ENCODE measurements at regions of chr4 and their contacts with region 1.

Region 1: GRCh38 chr4:149708513-149709175 is 107.0 kb downstream of the IQCM start:
- DNase-seq: peak; percentile 85
- ATAC-seq: peak; percentile 89
- H3K4me3 ChIP-seq: no peak overlapping the region
- H3K27ac ChIP-seq: peak overlapping the region; percentile 78
- H3K4me1 ChIP-seq: peaks cover 25% of the 10 kb centered on the region
- H3K27me3 ChIP-seq: no peaks in the 10 kb centered on the region
- CTCF ChIP-seq: no peak

Region 2: GRCh38 chr4:149512501-149512900 is 196.1 kb before region 1 on chr4:
- CTCF ChIA-PET with region 1: no interaction called
- POLR2A ChIA-PET with region 1: no interaction called
- intact Hi-C with region 1: loop called (anchors 10 kb)
- DNase-seq: no peak
- ATAC-seq: no peak
- H3K4me3 ChIP-seq: no peak overlapping the region
- H3K27ac ChIP-seq: no peak overlapping the region
- H3K4me1 ChIP-seq: no peaks in the 10 kb centered on the region
- H3K27me3 ChIP-seq: no peaks in the 10 kb centered on the region
- CTCF ChIP-seq: no peak

Region 3: DNA sequence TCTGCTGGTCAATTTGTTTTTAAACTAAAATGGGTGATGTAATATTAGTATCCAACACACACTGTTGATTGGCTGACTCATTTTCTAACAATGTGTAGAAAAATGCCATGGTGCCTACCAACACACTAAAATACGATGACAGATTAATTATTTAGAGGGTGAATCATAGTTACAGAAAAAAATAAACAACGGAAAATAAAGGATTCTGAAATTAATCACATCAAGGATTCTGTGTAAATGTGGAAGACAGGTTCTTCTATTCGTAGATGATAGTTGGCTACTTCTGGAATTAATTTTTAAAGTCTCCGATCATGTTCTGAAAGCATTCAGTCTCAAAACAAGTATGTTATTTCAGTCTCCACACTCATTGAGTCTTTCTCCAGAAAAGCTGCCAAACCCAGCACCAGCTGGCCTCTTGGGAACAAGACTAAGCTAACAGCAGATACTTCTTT is 115.2 kb after region 1 on chr4:
- CTCF ChIA-PET with region 1: no interaction called
- POLR2A ChIA-PET with region 1: no interaction called
- intact Hi-C with region 1: loop called (anchors 5 kb)
- DNase-seq: peak; percentile 79
- ATAC-seq: peak; percentile 88
- H3K4me3 ChIP-seq: peak overlapping the region; percentile 34; the same call in 1 of the 2 replicates
- H3K27ac ChIP-seq: peak overlapping the region; percentile 52
- H3K4me1 ChIP-seq: peaks cover 25% of the 10 kb centered on the region
- H3K27me3 ChIP-seq: no peaks in the 10 kb centered on the region
- CTCF ChIP-seq: no peak

Region 4: GRCh38 chr4:150038335-150039076 is 329.9 kb after region 1 on chr4:
- CTCF ChIA-PET with region 1: no interaction called
- POLR2A ChIA-PET with region 1: no interaction called
- intact Hi-C with region 1: no loop called
- DNase-seq: no peak
- ATAC-seq: no peak
- H3K4me3 ChIP-seq: no peak overlapping the region
- H3K27ac ChIP-seq: no peak overlapping the region
- H3K4me1 ChIP-seq: no peaks in the 10 kb centered on the region
- H3K27me3 ChIP-seq: no peaks in the 10 kb centered on the region
- CTCF ChIP-seq: no peak